Mammary epithelial cell (primary cell): ENCODE measurements at regions of chr5 and their contacts with region 1.

Region 1: GRCh38 chr5:172984243-172984953 is 827 bp downstream of the ATP6V0E1 start:
- DNase-seq: peak; percentile 85
- H3K4me3 ChIP-seq: peak overlapping the region; percentile 58 to 92 (median 78)
- H3K27ac ChIP-seq: peak overlapping the region; percentile 91
- H3K4me1 ChIP-seq: peaks cover 11% of the 10 kb centered on the region
- H3K27me3 ChIP-seq: no peaks in the 10 kb centered on the region
- CTCF ChIP-seq: peak; percentile 43 to 72

Region 2: GRCh38 chr5:172303572-172304335 is 680.6 kb before region 1 on chr5:
- CTCF ChIA-PET with region 1: interaction called, 20 read pairs
- dilution Hi-C with region 1: no loop called
- in situ Hi-C with region 1: no loop called
- intact Hi-C with region 1: no loop called
- DNase-seq: peak; percentile 78
- H3K4me3 ChIP-seq: no peak overlapping the region
- H3K27ac ChIP-seq: peak overlapping the region; percentile 44
- H3K4me1 ChIP-seq: no peaks in the 10 kb centered on the region
- H3K27me3 ChIP-seq: no peaks in the 10 kb centered on the region
- CTCF ChIP-seq: no peak

Region 3: GRCh38 chr5:172658961-172659491 is 325.4 kb before region 1 on chr5:
- CTCF ChIA-PET with region 1: no interaction called
- dilution Hi-C with region 1: no loop called
- in situ Hi-C with region 1: no loop called
- intact Hi-C with region 1: no loop called
- DNase-seq: no peak
- H3K4me3 ChIP-seq: no peak overlapping the region
- H3K27ac ChIP-seq: no peak overlapping the region
- H3K4me1 ChIP-seq: peaks cover 16% of the 10 kb centered on the region
- H3K27me3 ChIP-seq: no peaks in the 10 kb centered on the region
- CTCF ChIP-seq: no peak

Region 4: DNA sequence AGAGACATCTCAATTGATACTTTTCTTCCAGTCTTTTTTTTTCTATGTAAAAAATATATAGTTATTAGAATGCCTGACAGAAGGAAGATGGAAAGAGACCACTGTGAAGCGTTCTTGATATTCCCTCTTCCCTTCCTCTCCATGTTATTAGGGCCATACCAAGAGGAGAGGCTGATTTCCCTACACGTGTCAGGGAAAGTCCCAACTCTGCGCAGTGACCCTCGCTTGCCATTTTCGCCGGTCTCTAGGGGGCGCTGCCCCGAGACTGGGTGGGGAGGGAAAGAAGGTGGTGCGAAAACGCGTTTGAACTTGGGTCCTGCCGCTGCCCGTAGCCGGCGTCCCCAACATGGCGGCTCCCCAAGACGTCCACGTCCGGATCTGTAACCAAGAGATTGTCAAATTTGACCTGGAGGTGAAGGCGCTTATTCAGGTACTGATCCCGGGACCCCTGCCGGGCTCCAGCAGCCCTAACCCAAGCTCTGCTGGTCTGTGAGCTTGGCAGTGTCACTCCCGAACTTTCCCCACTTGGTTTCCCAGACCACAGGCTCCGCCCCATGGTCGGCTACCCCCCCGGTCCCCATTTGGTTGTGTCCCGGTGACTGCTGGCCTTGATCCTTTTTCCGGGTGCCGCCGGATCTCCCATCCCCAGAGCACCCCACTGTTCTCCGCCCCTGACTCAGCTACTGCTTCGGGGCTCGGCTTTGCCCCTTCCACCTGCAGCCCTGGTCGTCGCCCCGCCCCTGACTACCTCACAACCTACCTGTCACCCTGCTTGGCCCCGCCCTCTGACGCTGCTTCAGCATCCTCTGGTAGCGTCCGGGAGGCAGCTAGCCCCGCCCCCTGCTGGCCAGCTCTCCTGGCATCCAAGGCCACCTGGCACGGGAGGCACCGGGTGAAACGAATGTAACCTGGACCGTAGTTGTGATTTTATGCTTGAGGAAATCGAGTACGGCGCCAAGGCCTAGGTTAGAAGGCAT is 160.1 kb after region 1 on chr5 and contains the start of gene BNIP1:
- CTCF ChIA-PET with region 1: interaction called, 3 read pairs
- dilution Hi-C with region 1: no loop called
- in situ Hi-C with region 1: loop called in 1 of 2 experiments (anchors 25 kb)
- intact Hi-C with region 1: loop called (anchors 1 kb)
- DNase-seq: peak; percentile 93
- H3K4me3 ChIP-seq: peak within 1 kb of the TSS; percentile 79 to 89 (median 84)
- H3K27ac ChIP-seq: peak within 1 kb of the TSS; percentile 94
- H3K4me1 ChIP-seq: peaks cover 3% of the 10 kb centered on the region
- H3K27me3 ChIP-seq: no peaks in the 10 kb centered on the region
- CTCF ChIP-seq: peak; percentile 91 to 99
- total RNA-seq, gene BNIP1: 10.8 to 12.4 TPM

Region 5: DNA sequence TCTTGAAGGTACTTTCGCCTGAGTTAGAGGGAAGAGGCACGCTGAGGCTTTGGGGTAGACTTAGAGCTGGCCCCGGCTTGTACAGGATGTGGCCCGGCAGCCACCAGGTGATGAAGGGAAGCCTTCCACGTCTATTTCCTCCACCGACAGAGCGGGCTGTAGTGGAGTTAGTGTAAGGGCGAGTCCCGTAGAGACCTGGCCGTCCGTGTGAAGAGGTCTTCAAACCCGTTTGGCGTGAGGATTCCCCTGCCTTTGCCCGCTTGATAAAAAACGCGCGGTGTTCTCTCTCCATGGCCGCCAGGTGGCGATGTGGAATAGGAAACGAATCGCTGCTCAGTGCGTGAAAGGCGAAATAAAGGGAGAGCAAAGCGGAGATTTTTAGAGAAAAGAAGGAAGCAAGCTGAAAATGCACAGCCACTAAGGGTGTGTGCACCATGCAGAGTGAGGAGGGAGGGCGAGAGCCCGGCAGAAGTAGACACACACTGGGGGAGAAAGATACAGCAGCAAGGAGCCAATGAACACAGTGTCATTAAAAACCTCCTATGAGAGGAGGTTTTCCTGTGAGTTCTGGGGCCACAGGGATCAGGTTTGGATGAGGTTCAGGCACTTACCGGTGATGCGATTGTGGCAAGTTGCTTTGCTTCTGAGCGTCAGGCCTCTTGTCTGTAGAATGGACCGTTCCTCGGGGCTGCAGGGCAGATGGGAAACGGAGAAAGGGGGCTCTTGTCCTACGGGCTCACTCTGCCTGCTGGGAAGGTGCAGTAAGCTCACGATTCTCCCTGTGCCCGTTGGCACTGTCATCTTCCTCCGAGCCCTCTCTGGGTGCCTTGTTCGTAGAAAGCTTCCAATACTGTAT is 309.6 kb after region 1 on chr5:
- CTCF ChIA-PET with region 1: no interaction called
- dilution Hi-C with region 1: no loop called
- in situ Hi-C with region 1: loop called in 1 of 2 experiments (anchors 25 kb)
- intact Hi-C with region 1: no loop called
- DNase-seq: peak; percentile 65
- H3K4me3 ChIP-seq: no peak overlapping the region
- H3K27ac ChIP-seq: no peak overlapping the region
- H3K4me1 ChIP-seq: peaks cover 28% of the 10 kb centered on the region
- H3K27me3 ChIP-seq: no peaks in the 10 kb centered on the region
- CTCF ChIP-seq: peak; percentile 88 to 91

Region 6: GRCh38 chr5:173573126-173573960 is 588.9 kb after region 1 on chr5:
- CTCF ChIA-PET with region 1: no interaction called
- dilution Hi-C with region 1: no loop called
- in situ Hi-C with region 1: loop called in 1 of 2 experiments (anchors 25 kb)
- intact Hi-C with region 1: loop called (anchors 5 kb)
- DNase-seq: peak; percentile 37
- H3K4me3 ChIP-seq: peak overlapping the region in 1 of 3 experiments; percentile 16
- H3K27ac ChIP-seq: no peak overlapping the region
- H3K4me1 ChIP-seq: peaks cover 15% of the 10 kb centered on the region
- H3K27me3 ChIP-seq: no peaks in the 10 kb centered on the region
- CTCF ChIP-seq: peak; percentile 80 to 96

Region 7: DNA sequence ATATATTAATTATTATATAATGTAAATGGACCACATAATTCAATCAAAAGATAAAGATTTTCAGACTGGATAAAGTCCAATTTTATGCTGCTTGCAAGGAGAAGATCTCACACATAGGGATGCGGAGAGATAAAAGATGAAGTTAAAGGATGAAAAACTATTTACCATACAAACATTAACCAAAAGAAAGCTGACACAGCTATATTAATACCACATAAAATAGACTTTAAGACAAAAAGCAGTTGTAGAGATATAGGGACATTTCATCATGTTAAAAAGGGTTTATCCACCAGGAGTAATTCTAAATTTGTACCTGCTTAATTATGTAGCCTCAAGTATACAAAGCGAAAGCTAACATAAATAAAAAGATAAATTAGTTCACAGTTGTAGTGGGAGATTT is 1045.9 kb after region 1 on chr5:
- CTCF ChIA-PET with region 1: no interaction called
- dilution Hi-C with region 1: no loop called
- in situ Hi-C with region 1: no loop called
- intact Hi-C with region 1: no loop called
- DNase-seq: no peak
- H3K4me3 ChIP-seq: no peak overlapping the region
- H3K27ac ChIP-seq: no peak overlapping the region
- H3K4me1 ChIP-seq: no peaks in the 10 kb centered on the region
- H3K27me3 ChIP-seq: no peaks in the 10 kb centered on the region
- CTCF ChIP-seq: no peak